ENCODE measurements at regions of chr7 and their contacts with region 1.

Region 1: GRCh38 chr7:17318146-17318545 is 19.7 kb downstream of the AHR start:
- DNase-seq: no peak
- H3K4me3 ChIP-seq: no peak overlapping the region
- H3K27ac ChIP-seq: no peak overlapping the region
- H3K4me1 ChIP-seq: no peaks in the 10 kb centered on the region
- H3K27me3 ChIP-seq: no peaks in the 10 kb centered on the region
- CTCF ChIP-seq: no peak

Region 2: GRCh38 chr7:17370092-17370491 is 51.9 kb after region 1 on chr7:
- intact Hi-C with region 1: loop called (anchors 10 kb)
- DNase-seq: no peak
- H3K4me3 ChIP-seq: no peak overlapping the region
- H3K27ac ChIP-seq: no peak overlapping the region
- H3K4me1 ChIP-seq: no peaks in the 10 kb centered on the region
- H3K27me3 ChIP-seq: no peaks in the 10 kb centered on the region
- CTCF ChIP-seq: no peak